H1 (cell line): ENCODE measurements at regions of chr20 and their contacts with region 1.

Region 1: GRCh38 chr20:39057911-39058310 is 95.8 kb downstream of the DHX35 start:
- DNase-seq: no peak
- H3K4me3 ChIP-seq: no peak overlapping the region
- H3K27ac ChIP-seq: no peak overlapping the region
- H3K4me1 ChIP-seq: no peaks in the 10 kb centered on the region
- H3K27me3 ChIP-seq: no peaks in the 10 kb centered on the region
- CTCF ChIP-seq: no peak
- EP300 ChIP-seq: no peak
- POLR2A ChIP-seq: no peak
- RAD21 ChIP-seq: no peak

Region 2: GRCh38 chr20:38601216-38602184 is 456.4 kb before region 1 on chr20 and contains the start of gene ARHGAP40:
- CTCF ChIA-PET with region 1: no interaction called
- POLR2A ChIA-PET with region 1: no interaction called
- DNase-seq: peak in 1 of 2 experiments; percentile 72
- H3K4me3 ChIP-seq: peak within 1 kb of the TSS; percentile 9 to 56 (median 30); a peak in 7 of 8 replicates
- H3K27ac ChIP-seq: no peak within 1 kb of the TSS; the same call in 1 of the 2 replicates
- H3K4me1 ChIP-seq: peaks cover 0 to 16% (median 12%) of the 10 kb centered on the region in 4 experiments; a peak in 6 of 7 replicates
- H3K27me3 ChIP-seq: peaks cover 0 to 9% (median 4%) of the 10 kb centered on the region in 4 experiments; a peak in 4 of 7 replicates
- CTCF ChIP-seq: peak in 2 of 3 experiments; percentile 31 to 43; a peak in 2 of 4 replicates
- EP300 ChIP-seq: no peak
- POLR2A ChIP-seq: no peak
- RAD21 ChIP-seq: no peak
- total RNA-seq, gene ARHGAP40: 0.74 and 0.86 TPM in 2 replicates

Region 3: DNA sequence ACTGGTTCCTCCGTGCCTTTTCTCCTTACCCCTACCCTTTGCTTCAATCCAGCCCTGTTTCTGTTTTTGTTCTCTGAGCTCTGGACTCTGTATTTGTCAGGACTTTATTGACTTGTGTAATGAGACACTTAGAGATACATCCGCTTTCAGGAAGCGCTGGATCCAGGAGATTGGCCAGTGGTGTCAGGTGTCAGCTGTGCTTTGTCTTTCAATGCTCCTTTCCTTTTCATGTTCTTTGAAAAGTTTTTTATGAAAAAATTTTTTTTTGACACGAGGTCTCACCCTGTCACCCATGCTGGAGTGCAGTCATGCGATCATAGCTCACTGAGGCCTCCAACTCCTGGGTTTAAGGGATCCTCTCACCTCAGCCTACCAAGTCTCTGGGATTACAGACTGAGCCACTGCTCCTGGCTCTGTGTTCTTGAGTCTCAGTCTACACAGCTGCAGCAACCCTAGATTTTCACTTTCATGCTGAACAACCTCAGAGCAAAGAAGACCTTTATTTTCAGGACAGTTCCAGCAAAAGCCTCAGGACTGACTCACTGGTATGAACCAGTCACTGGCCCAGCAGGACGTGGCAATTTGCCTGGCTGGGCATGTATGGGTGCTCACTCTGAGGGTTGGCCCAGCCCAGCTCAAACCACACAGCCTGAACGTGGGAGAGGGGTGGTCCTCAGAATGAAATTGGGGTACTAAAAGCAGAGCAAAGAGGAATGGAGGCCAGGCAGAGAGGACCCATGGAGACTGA is 12.7 kb after region 1 on chr20:
- CTCF ChIA-PET with region 1: interaction called, 197 read pairs
- POLR2A ChIA-PET with region 1: no interaction called
- DNase-seq: no peak
- H3K4me3 ChIP-seq: no peak overlapping the region
- H3K27ac ChIP-seq: no peak overlapping the region
- H3K4me1 ChIP-seq: peaks cover 0 to 3% (median 0%) of the 10 kb centered on the region in 4 experiments; a peak in 2 of 7 replicates
- H3K27me3 ChIP-seq: 0 out of 7 replicates have a peak, but pooled peaks cover 0 to 2% (median 0%) of the 10 kb centered on the region in 4 experiments
- CTCF ChIP-seq: no peak
- EP300 ChIP-seq: no peak
- POLR2A ChIP-seq: no peak
- RAD21 ChIP-seq: no peak